ENCODE measurements at regions of chr14 and their contacts with region 1.

Region 1: GRCh38 chr14:37903343-37904191 is 304.1 kb upstream of the SSTR1 start:
- DNase-seq: peak in 4 of 5 donors; percentile 27 to 45 (median 33)
- H3K4me3 ChIP-seq: no peak overlapping the region
- H3K4me3 Mint-ChIP-seq: no peak overlapping the region
- H3K27ac ChIP-seq: no peak overlapping the region
- H3K27ac Mint-ChIP-seq: peak overlapping the region in 1 of 7 donors; percentile 10
- H3K4me1 ChIP-seq: no peaks in the 10 kb centered on the region
- H3K4me1 Mint-ChIP-seq: peaks cover 0 to 3% (median 2%) of the 10 kb centered on the region in 4 donors
- H3K27me3 ChIP-seq: no peaks in the 10 kb centered on the region
- H3K27me3 Mint-ChIP-seq: peaks cover 14 to 21% of the 10 kb centered on the region in 2 donors

Region 2: DNA sequence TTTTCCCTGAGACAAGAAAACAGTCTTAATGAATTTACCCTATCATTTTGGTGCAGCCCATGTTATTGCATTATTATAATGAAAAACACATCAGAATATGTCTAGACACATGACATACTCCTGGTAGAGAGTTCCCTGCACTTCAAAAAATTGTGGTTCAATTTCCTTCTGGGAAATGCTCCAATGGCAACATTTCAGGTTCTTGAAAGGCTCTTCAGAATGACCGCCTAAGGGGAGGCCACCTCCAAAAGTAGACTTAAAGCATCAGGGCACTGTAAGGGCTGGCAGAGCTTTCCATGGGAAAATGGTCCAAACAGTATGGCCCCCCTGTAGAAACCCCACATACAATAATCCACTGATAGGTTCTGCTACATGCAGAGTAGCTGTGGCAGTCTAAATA is 841.9 kb before region 1 on chr14:
- CTCF ChIA-PET with region 1: no interaction called
- POLR2A ChIA-PET with region 1: no interaction called
- intact Hi-C with region 1: no loop called
- DNase-seq: no peak
- H3K4me3 ChIP-seq: no peak overlapping the region
- H3K4me3 Mint-ChIP-seq: no peak overlapping the region
- H3K27ac ChIP-seq: no peak overlapping the region
- H3K27ac Mint-ChIP-seq: no peak overlapping the region
- H3K4me1 ChIP-seq: no peaks in the 10 kb centered on the region
- H3K4me1 Mint-ChIP-seq: no peaks in the 10 kb centered on the region
- H3K27me3 ChIP-seq: no peaks in the 10 kb centered on the region
- H3K27me3 Mint-ChIP-seq: no peaks in the 10 kb centered on the region

Region 3: GRCh38 chr14:37885569-37885968 is 18.0 kb before region 1 on chr14:
- CTCF ChIA-PET with region 1: no interaction called
- POLR2A ChIA-PET with region 1: no interaction called
- intact Hi-C with region 1: no loop called
- DNase-seq: no peak
- H3K4me3 ChIP-seq: no peak overlapping the region
- H3K4me3 Mint-ChIP-seq: no peak overlapping the region
- H3K27ac ChIP-seq: no peak overlapping the region
- H3K27ac Mint-ChIP-seq: no peak overlapping the region
- H3K4me1 ChIP-seq: no peaks in the 10 kb centered on the region
- H3K4me1 Mint-ChIP-seq: no peaks in the 10 kb centered on the region
- H3K27me3 ChIP-seq: no peaks in the 10 kb centered on the region
- H3K27me3 Mint-ChIP-seq: peaks cover 2 to 4% of the 10 kb centered on the region in 2 donors

Region 4: DNA sequence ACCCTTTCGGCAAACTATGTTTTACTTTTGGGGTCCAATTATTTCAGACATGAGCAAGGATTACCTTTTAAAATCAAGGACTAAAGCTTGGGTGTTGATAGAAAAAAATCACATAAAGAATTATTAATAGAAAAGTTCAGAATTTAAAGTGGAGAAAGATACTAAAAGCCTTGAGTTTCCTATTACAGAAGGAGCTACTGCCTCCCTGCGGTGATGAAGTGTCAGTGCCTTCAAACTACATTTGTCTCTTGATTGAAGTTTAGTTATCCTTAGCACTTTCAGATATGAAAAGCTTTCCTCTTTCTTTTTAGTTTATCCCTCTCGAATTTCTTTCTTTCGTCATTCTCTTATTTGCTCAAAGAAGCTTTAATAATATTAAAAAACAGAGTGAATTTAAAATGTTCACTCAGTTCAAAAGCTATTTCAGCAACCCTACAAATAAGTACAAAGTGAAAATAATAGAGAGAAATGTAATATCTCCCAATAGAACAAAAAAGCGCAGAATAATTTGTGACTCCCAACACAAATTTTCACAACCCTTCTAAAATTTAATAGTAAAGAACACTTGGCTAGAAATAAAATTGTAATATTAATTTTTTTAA is 1111.9 kb after region 1 on chr14:
- CTCF ChIA-PET with region 1: no interaction called
- POLR2A ChIA-PET with region 1: no interaction called
- intact Hi-C with region 1: loop called (anchors 1 kb)
- DNase-seq: peak in 4 of 5 donors; percentile 3 to 19 (median 8)
- H3K4me3 ChIP-seq: no peak overlapping the region
- H3K4me3 Mint-ChIP-seq: no peak overlapping the region
- H3K27ac ChIP-seq: no peak overlapping the region
- H3K27ac Mint-ChIP-seq: no peak overlapping the region
- H3K4me1 ChIP-seq: no peaks in the 10 kb centered on the region
- H3K4me1 Mint-ChIP-seq: peaks cover 0 to 1% (median 0%) of the 10 kb centered on the region in 4 donors
- H3K27me3 ChIP-seq: no peaks in the 10 kb centered on the region
- H3K27me3 Mint-ChIP-seq: no peaks in the 10 kb centered on the region